Activated B cell treated with CpG ODN at 0.5 μM for 24 hours (primary cell): ENCODE measurements at regions of chr10 and their contacts with region 1.

Region 1: GRCh38 chr10:17257466-17258321 is 29.7 kb downstream of the VIM start:
- DNase-seq: no peak
- ATAC-seq: peak; percentile 74
- H3K4me3 Mint-ChIP-seq: no peak overlapping the region
- H3K27ac Mint-ChIP-seq: no peak overlapping the region
- H3K4me1 Mint-ChIP-seq: peaks cover 6% of the 10 kb centered on the region
- H3K27me3 Mint-ChIP-seq: peaks cover 5% of the 10 kb centered on the region
- CTCF ChIP-seq: peak; percentile 88

Region 2: GRCh38 chr10:15879058-15879457 is 1378.6 kb before region 1 on chr10:
- CTCF ChIA-PET with region 1: no interaction called
- POLR2A ChIA-PET with region 1: no interaction called
- intact Hi-C with region 1: loop called (anchors 10 kb)
- DNase-seq: no peak
- ATAC-seq: no peak
- H3K4me3 Mint-ChIP-seq: no peak overlapping the region
- H3K27ac Mint-ChIP-seq: no peak overlapping the region
- H3K4me1 Mint-ChIP-seq: no peaks in the 10 kb centered on the region
- H3K27me3 Mint-ChIP-seq: peaks cover 45% of the 10 kb centered on the region
- CTCF ChIP-seq: no peak

Region 3: DNA sequence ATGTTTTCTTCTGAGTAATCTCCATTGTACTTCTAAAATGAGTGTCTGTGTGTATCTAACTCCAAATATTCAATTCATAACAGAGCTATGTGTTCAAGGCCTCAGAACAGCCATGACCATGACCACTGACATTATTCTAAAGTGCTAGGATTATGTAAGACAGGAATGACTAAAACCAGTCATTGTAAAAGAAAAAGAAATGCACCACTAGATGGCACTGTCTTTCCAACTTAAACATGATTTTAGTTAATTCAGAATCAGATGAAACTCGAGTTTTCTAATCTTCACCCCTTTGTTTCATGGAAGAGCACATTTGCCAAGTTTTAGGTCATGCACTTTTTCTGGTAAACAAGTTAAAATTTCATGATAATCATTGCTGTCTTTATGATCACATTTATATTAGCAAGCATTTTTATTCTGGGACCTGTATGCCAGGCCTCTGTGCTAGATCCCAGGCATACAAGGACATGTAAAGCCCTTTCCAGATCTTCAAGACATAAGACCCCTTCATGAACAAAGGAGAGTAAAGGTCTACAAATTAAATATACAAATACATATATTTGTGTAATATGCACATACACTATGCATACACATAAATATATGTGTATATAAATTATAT is 414.3 kb before region 1 on chr10:
- CTCF ChIA-PET with region 1: interaction called, 9 read pairs
- POLR2A ChIA-PET with region 1: no interaction called
- intact Hi-C with region 1: loop called (anchors 1 kb)
- DNase-seq: no peak
- ATAC-seq: peak; percentile 37
- H3K4me3 Mint-ChIP-seq: no peak overlapping the region
- H3K27ac Mint-ChIP-seq: no peak overlapping the region
- H3K4me1 Mint-ChIP-seq: no peaks in the 10 kb centered on the region
- H3K27me3 Mint-ChIP-seq: no peaks in the 10 kb centered on the region
- CTCF ChIP-seq: peak; percentile 35

Region 4: DNA sequence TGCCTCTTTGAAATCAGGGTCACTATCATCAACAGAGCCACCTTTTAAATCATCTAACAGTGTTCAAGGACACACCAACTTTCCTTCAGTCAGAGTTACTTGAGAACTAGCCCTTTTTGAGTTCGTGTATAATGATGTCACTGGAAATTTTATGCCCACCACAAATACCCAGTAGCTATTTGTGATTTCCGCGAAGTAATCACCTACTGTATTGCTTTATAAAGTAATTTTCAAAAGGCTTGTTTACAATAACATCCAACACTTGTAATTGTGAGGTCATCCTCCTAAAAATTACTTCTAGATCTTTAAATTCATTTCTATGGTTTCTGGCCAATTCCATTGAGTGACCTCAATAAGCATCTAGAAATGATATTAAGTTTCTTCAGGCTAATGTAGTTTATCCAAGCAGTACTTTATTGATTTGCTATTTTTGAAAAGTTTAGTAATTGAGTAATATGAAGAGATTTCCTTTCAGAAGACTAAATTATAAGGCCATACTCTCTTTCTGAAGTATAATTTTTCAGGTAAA is 69.0 kb before region 1 on chr10:
- CTCF ChIA-PET with region 1: no interaction called
- POLR2A ChIA-PET with region 1: no interaction called
- intact Hi-C with region 1: no loop called
- DNase-seq: no peak
- ATAC-seq: no peak
- H3K4me3 Mint-ChIP-seq: no peak overlapping the region
- H3K27ac Mint-ChIP-seq: no peak overlapping the region
- H3K4me1 Mint-ChIP-seq: peaks cover 2% of the 10 kb centered on the region
- H3K27me3 Mint-ChIP-seq: no peaks in the 10 kb centered on the region
- CTCF ChIP-seq: no peak

Region 5: DNA sequence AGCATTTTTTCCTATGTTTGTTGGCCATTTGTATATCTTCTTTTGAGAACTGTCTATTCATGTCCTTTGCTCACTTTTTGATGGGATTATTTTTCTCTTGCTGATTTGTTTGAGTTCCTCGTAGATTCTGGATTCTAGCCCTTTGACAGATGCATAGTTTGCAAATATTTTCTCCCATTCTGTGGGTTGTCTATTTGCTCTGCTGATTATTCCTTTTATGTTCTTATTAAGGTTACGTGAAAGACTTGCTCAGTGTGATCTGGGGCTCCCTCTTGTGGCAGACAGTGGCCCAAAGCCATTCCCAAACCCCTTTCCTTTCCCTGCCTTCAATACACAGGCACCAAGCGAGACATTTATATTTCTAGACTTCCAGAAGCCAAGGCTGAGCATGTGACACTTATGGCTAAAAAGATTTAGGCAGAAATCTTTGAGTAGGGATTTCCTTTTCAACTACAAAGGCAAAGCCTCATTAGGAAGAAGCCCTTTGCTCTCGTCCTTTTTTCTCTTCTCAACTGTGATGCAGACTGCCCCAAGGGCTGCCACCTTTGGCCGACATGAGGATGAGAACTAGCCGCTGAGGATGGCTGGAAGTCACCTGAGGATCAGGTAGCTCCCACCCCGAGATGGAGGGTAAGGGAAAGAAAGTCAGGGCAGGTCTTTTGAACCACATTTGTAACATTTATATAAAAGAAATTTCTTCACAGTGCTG is 173.1 kb after region 1 on chr10:
- CTCF ChIA-PET with region 1: no interaction called
- POLR2A ChIA-PET with region 1: no interaction called
- intact Hi-C with region 1: loop called (anchors 1 kb)
- DNase-seq: no peak
- ATAC-seq: peak; percentile 49
- H3K4me3 Mint-ChIP-seq: no peak overlapping the region
- H3K27ac Mint-ChIP-seq: no peak overlapping the region
- H3K4me1 Mint-ChIP-seq: peaks cover 49% of the 10 kb centered on the region
- H3K27me3 Mint-ChIP-seq: peaks cover 23% of the 10 kb centered on the region
- CTCF ChIP-seq: peak; percentile 72